CD4-positive, alpha-beta memory T cell (primary cell): ENCODE measurements at regions of chr7 and their contacts with region 1.

Region 1: GRCh38 chr7:129298268-129298893 is 73.6 kb downstream of the AHCYL2 start:
- DNase-seq: peak in 4 of 5 donors; percentile 22 to 45 (median 32)
- H3K4me3 ChIP-seq: no peak overlapping the region
- H3K4me3 Mint-ChIP-seq: no peak overlapping the region
- H3K27ac ChIP-seq: no peak overlapping the region
- H3K27ac Mint-ChIP-seq: peak overlapping the region in 1 of 7 donors; percentile 61
- H3K4me1 ChIP-seq: no peaks in the 10 kb centered on the region
- H3K4me1 Mint-ChIP-seq: peaks cover 0 to 1% (median 0%) of the 10 kb centered on the region in 4 donors
- H3K27me3 ChIP-seq: no peaks in the 10 kb centered on the region
- H3K27me3 Mint-ChIP-seq: no peaks in the 10 kb centered on the region

Region 2: DNA sequence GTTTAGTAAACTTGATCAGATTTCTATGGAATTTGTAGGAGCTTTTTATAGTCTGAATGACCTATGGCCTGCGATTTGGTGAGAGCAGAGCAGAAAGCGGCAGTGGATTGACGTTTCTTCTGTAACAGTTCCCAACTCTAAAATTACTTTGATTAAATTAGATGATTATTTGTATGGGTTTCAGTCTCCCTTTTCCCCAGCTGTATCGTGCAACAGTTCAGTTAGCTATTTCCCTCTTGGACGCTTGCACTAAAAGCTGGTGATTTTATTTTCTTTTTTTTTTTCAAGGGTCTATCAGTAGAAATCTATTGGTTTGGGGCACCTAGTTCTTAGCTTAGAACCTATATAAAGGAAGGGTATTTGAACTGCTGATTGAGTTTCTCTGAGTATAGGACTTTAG is 66.7 kb before region 1 on chr7:
- CTCF ChIA-PET with region 1: interaction called, 10 read pairs
- POLR2A ChIA-PET with region 1: no interaction called
- intact Hi-C with region 1: no loop called
- DNase-seq: no peak
- H3K4me3 ChIP-seq: no peak overlapping the region
- H3K4me3 Mint-ChIP-seq: no peak overlapping the region
- H3K27ac ChIP-seq: no peak overlapping the region
- H3K27ac Mint-ChIP-seq: no peak overlapping the region
- H3K4me1 ChIP-seq: peaks cover 2% of the 10 kb centered on the region
- H3K4me1 Mint-ChIP-seq: peaks cover 16 to 24% (median 21%) of the 10 kb centered on the region in 4 donors
- H3K27me3 ChIP-seq: no peaks in the 10 kb centered on the region
- H3K27me3 Mint-ChIP-seq: no peaks in the 10 kb centered on the region

Region 3: DNA sequence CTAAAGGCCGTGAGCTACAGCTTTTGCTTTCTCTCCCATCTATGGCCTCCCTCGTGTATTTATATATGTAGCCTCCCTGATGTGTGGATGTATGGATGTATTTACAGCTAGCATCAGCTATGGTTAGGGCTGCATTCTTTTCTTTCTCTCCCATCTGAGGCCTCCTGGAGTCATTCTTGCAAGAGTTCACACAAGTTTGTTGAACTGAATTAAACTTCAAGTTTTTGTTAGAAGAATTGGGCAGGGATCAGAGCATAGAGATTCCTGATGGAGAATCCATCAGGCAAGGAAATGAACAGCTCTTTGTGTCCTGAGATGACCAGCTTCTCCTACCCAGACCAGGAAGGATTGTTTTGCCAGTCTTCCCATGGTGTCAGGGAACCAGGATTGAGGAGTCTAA is 13.3 kb before region 1 on chr7:
- CTCF ChIA-PET with region 1: interaction called, 12 read pairs
- POLR2A ChIA-PET with region 1: interaction called, 3 read pairs
- intact Hi-C with region 1: no loop called
- DNase-seq: no peak
- H3K4me3 ChIP-seq: no peak overlapping the region
- H3K4me3 Mint-ChIP-seq: no peak overlapping the region
- H3K27ac ChIP-seq: no peak overlapping the region
- H3K27ac Mint-ChIP-seq: no peak overlapping the region
- H3K4me1 ChIP-seq: no peaks in the 10 kb centered on the region
- H3K4me1 Mint-ChIP-seq: peaks cover 0 to 2% (median 0%) of the 10 kb centered on the region in 4 donors
- H3K27me3 ChIP-seq: no peaks in the 10 kb centered on the region
- H3K27me3 Mint-ChIP-seq: no peaks in the 10 kb centered on the region

Region 4: DNA sequence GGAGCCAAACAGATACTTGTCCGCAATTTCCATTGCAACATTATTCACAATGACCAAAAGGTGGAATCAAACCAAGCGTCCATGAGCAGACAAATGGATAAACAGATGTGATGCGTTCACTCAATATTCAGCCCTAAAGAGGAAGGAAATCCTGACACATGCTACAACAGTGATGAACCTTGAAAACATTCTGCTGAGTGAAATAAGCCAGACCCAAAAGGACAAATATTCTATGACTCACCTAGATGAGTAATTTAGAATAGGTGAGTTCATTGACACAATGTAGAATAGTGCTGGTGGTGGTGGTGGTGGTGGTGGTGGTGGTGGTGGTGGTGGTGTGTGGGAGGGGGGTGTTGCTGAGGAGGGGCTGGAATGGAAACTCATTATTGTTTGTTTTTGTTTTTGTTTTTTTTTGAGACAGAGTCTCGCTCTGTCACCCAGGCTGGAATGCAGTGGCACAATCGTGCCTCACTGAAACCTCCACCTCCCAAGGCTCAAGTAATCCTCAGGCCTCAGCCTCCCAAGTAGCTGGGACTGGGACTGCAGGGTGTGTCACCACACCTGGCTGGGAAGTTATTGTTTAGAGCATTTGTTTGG is 232.5 kb after region 1 on chr7:
- CTCF ChIA-PET with region 1: no interaction called
- POLR2A ChIA-PET with region 1: no interaction called
- intact Hi-C with region 1: no loop called
- DNase-seq: no peak
- H3K4me3 ChIP-seq: no peak overlapping the region
- H3K4me3 Mint-ChIP-seq: no peak overlapping the region
- H3K27ac ChIP-seq: no peak overlapping the region
- H3K27ac Mint-ChIP-seq: peak overlapping the region in 1 of 7 donors; percentile 88
- H3K4me1 ChIP-seq: no peaks in the 10 kb centered on the region
- H3K4me1 Mint-ChIP-seq: peaks cover 2 to 4% (median 3%) of the 10 kb centered on the region in 4 donors
- H3K27me3 ChIP-seq: no peaks in the 10 kb centered on the region
- H3K27me3 Mint-ChIP-seq: peaks cover 2 to 5% of the 10 kb centered on the region in 2 donors